ENCODE measurements at regions of chr1 and their contacts with region 1.

Region 1: DNA sequence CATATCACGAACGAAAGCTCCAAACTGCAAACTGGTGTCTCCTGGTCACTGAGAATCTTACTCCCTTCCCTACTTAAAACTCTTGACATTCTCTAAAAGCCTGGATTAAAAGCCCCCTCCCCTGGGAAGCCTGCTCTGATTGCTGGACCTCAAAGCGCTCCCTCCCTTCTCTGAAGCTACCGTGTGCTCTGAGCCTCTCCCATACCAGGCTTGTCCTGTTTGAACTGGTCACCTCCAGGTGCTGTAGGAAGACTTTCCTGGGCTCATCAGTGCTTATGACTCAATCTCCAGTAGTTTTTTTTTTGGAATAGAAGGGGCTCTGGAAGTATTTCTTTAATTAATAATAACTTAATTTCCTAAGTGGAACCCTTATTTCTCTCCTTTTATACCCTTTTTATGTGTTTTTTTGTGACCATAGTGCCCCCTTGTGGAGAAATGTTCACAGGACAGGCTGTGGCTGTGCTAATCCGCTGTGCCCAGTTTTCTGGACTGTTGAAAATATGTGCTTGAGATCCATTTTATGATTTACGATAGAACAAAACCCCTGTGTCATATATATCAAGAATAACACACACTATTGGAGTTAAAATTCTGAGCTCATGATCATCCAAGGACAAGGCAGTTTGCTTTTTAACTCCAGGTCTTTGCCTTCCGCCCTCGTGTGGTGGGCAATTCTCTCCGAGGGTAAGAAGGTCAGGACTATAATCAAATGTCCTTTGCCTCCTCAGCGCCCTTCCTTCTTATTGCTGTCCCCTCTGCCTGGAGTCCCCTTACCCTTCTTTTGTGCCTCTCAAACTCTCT is 16.9 kb downstream of the MTARC1 start:
- DNase-seq: peak; percentile 59
- H3K4me3 ChIP-seq: no peak overlapping the region
- H3K27ac ChIP-seq: no peak overlapping the region
- H3K4me1 ChIP-seq: no peaks in the 10 kb centered on the region
- H3K27me3 ChIP-seq: peaks cover 6 to 11% of the 10 kb centered on the region in 2 experiments
- CTCF ChIP-seq: peak; percentile 62 to 83
- POLR2A ChIP-seq: no peak

Region 2: DNA sequence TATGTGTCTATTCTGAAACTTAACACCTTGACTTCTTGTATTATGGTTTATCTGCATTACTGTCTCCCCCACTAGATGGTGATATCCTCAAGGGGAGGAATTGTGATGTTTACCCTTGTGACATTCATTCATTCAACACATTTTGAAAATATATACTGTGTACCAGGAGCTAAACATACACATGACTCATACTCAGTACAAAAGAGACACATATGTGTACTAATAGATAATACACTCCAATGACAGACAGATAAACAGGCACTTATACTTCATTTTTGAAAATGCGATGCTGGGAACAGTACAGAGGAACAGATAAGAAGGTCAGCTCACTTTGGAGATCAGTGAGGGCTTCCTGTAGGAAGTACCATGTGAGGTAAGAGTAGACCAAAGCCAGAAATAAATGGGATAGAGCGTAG is 522.4 kb before region 1 on chr1:
- CTCF ChIA-PET with region 1: interaction called, 27 read pairs
- POLR2A ChIA-PET with region 1: no interaction called
- dilution Hi-C with region 1: no loop called
- intact Hi-C with region 1: loop called (anchors 1 kb)
- DNase-seq: peak; percentile 53
- H3K4me3 ChIP-seq: no peak overlapping the region
- H3K27ac ChIP-seq: no peak overlapping the region
- H3K4me1 ChIP-seq: no peaks in the 10 kb centered on the region
- H3K27me3 ChIP-seq: peaks cover 20 to 24% of the 10 kb centered on the region in 2 experiments
- CTCF ChIP-seq: peak; percentile 17 to 18
- POLR2A ChIP-seq: no peak

Region 3: DNA sequence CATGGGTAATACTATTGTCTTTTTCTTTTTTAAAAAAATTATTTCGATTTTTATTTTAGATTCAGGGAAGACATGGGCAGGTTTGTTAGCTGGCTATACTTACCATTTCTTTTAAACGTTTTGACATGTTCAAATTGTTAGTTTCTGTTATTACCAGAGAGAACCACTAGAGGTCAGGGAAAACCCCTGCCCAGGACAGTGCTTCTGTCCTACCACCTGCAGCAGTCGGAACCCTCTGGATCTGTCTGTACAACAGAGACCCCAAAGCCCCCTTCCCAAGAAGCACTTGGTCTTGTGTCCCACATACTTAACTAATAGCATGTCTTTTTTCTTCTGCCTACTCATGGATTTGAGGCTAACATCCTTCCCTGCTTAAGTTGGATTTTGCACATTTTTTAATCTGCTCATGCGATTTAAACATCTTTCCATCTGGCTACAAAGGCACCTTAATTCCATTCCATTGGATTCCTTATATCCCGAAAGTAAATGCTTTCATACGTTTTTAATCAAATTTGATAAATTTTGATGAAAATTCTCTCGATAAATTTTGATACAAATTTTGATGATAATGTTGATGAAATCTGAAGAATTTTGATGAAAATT is 123.4 kb before region 1 on chr1:
- CTCF ChIA-PET with region 1: interaction called, 5 read pairs
- POLR2A ChIA-PET with region 1: no interaction called
- dilution Hi-C with region 1: no loop called
- intact Hi-C with region 1: loop called (anchors 1 kb)
- DNase-seq: peak; percentile 70
- H3K4me3 ChIP-seq: no peak overlapping the region
- H3K27ac ChIP-seq: no peak overlapping the region
- H3K4me1 ChIP-seq: no peaks in the 10 kb centered on the region
- H3K27me3 ChIP-seq: no peaks in the 10 kb centered on the region
- CTCF ChIP-seq: peak; percentile 60 to 64
- POLR2A ChIP-seq: no peak